PC-3 (cell line): ENCODE measurements at regions of chr6 and their contacts with region 1.

Region 1: DNA sequence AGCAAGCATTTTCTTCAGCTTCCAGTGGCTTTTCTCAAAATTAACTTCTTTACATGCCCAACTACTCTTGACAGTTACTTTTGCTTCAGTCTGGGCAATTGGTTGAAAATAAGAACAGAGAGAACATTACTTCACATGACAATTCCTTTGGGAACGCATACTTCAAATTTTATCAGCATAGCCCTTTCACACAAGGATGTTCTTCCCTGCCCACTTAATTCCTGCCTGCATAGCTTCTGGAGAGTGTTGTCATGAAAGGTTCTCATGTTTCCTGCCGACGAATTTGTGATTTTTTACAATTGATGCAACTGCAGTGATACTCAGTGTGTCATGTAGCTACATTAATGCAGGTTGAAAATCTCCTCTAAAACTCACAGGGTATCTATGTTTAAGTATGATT is 22.0 kb upstream of the SNRNP48 start:
- DNase-seq: no peak
- ATAC-seq: no peak
- H3K4me3 ChIP-seq: no peak overlapping the region
- H3K27ac ChIP-seq: no peak overlapping the region
- H3K4me1 ChIP-seq: no peaks in the 10 kb centered on the region
- H3K27me3 ChIP-seq: no peaks in the 10 kb centered on the region
- CTCF ChIP-seq: no peak

Region 2: GRCh38 chr6:7300926-7301325 is 267.1 kb before region 1 on chr6:
- CTCF ChIA-PET with region 1: interaction called, 3 read pairs
- POLR2A ChIA-PET with region 1: interaction called, 10 read pairs
- intact Hi-C with region 1: no loop called
- DNase-seq: no peak
- ATAC-seq: no peak
- H3K4me3 ChIP-seq: no peak overlapping the region
- H3K27ac ChIP-seq: no peak overlapping the region
- H3K4me1 ChIP-seq: no peaks in the 10 kb centered on the region
- H3K27me3 ChIP-seq: no peaks in the 10 kb centered on the region
- CTCF ChIP-seq: no peak